CD4-positive, alpha-beta T cell (primary cell): ENCODE measurements at regions of chrX and their contacts with region 1.

Region 1: GRCh38 chrX:134484039-134484438 is 24.1 kb downstream of the HPRT1 start:
- DNase-seq: peak in 3 of 14 experiments; percentile 47 to 57 (median 54)
- ATAC-seq: peak; percentile 37
- H3K4me3 ChIP-seq: no peak overlapping the region
- H3K4me3 Mint-ChIP-seq: no peak overlapping the region
- H3K27ac ChIP-seq: no peak overlapping the region
- H3K27ac Mint-ChIP-seq: no peak overlapping the region
- H3K4me1 ChIP-seq: no peaks in the 10 kb centered on the region
- H3K4me1 Mint-ChIP-seq: no peaks in the 10 kb centered on the region
- H3K27me3 ChIP-seq: no peaks in the 10 kb centered on the region
- H3K27me3 Mint-ChIP-seq: no peaks in the 10 kb centered on the region
- CTCF ChIP-seq: peak; percentile 63

Region 2: DNA sequence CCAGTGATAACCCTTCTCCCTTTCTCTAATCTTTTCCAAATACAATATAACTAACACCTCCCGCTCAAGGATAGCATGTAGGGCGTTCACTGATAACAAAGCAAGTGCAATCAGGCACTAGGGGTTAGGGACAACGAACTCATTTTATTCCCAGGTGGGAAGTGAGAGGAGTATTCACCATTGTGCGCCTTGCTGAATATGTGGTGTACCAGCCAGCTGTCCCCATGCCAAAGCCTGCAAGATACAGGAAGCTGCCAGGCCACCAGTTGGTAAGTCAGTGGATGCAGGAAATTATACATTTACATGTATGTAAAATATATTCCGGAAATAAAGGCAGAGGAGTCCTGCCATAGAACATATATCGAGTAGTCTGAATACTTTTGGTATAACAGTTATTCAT is 30.4 kb before region 1 on chrX:
- CTCF ChIA-PET with region 1: no interaction called
- POLR2A ChIA-PET with region 1: no interaction called
- intact Hi-C with region 1: no loop called
- DNase-seq: no peak
- ATAC-seq: no peak
- H3K4me3 ChIP-seq: no peak overlapping the region
- H3K4me3 Mint-ChIP-seq: no peak overlapping the region
- H3K27ac ChIP-seq: no peak overlapping the region
- H3K27ac Mint-ChIP-seq: no peak overlapping the region
- H3K4me1 ChIP-seq: no peaks in the 10 kb centered on the region
- H3K4me1 Mint-ChIP-seq: no peaks in the 10 kb centered on the region
- H3K27me3 ChIP-seq: no peaks in the 10 kb centered on the region
- H3K27me3 Mint-ChIP-seq: no peaks in the 10 kb centered on the region
- CTCF ChIP-seq: no peak

Region 3: DNA sequence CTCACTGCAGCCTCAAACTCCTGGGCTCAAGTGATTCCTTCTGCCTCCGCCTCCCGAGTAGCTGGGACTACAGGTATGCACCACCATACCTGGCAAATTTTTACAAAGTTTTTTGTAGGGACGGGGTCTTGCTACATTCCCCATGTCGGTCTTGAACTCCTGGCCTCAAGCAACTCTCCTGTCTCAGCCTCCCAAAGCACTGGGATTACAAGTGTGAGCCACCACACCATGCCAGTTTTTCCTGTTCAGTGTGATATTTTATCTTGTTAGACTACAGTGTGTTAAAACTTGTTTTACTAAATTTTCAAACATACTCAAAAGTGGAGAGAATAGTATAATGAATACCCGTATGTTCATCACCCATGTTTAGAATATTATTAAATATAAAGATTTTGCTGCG is 12.0 kb before region 1 on chrX:
- CTCF ChIA-PET with region 1: no interaction called
- POLR2A ChIA-PET with region 1: no interaction called
- intact Hi-C with region 1: no loop called
- DNase-seq: no peak
- ATAC-seq: no peak
- H3K4me3 ChIP-seq: no peak overlapping the region
- H3K4me3 Mint-ChIP-seq: no peak overlapping the region
- H3K27ac ChIP-seq: no peak overlapping the region
- H3K27ac Mint-ChIP-seq: no peak overlapping the region
- H3K4me1 ChIP-seq: no peaks in the 10 kb centered on the region
- H3K4me1 Mint-ChIP-seq: no peaks in the 10 kb centered on the region
- H3K27me3 ChIP-seq: no peaks in the 10 kb centered on the region
- H3K27me3 Mint-ChIP-seq: no peaks in the 10 kb centered on the region
- CTCF ChIP-seq: no peak

Region 4: DNA sequence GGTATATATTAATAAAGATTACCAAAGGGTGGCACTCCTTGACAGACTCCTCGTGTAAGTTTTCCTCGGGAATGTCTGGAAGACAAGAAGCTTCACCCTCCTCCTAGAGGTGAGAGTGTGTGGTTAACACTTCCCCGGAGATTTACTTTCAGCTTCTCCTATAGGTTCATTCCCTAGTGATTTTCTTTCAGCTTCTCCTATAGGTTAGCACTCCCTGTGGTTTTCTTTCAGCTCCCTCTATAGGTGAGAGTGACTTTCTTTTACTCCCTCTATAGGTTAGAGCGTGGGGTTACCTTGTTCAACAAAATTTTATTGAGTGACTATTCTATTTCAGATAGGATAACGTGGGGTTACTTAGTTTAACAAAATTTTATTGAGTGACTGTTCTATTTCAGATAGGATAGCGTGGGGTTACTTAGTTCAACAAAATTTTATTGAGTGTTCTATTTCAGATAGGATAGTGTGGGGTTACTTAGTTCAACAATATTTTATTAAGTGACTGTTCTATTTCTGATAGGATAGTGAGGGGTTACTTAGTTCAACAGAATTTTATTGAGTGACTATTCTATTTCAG is 280.3 kb after region 1 on chrX:
- CTCF ChIA-PET with region 1: no interaction called
- POLR2A ChIA-PET with region 1: no interaction called
- intact Hi-C with region 1: loop called in 1 of 2 experiments (anchors 5 kb)
- DNase-seq: peak in 3 of 14 experiments; percentile 32 to 45 (median 44)
- ATAC-seq: peak; percentile 68
- H3K4me3 ChIP-seq: no peak overlapping the region
- H3K4me3 Mint-ChIP-seq: no peak overlapping the region
- H3K27ac ChIP-seq: no peak overlapping the region
- H3K27ac Mint-ChIP-seq: no peak overlapping the region
- H3K4me1 ChIP-seq: no peaks in the 10 kb centered on the region
- H3K4me1 Mint-ChIP-seq: no peaks in the 10 kb centered on the region
- H3K27me3 ChIP-seq: no peaks in the 10 kb centered on the region
- H3K27me3 Mint-ChIP-seq: no peaks in the 10 kb centered on the region
- CTCF ChIP-seq: no peak

Region 5: DNA sequence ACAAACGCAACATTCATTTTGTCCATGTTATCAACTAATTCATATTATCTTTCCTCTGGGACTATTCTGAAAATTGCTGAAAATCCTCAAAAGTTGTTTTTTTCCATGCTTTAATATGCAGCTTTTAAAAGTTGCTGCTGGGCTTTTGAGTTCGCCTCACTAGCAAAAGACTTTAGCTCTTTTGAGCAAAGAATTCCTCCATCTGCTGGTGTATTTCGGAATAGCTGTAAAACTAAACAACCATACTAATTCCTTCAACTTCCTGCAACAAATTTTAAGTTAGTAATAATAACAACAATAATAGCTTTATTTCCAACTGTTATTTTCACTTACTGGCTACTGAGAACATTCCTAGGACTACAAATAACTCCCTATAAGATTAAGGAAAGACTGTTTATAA is 298.8 kb after region 1 on chrX:
- CTCF ChIA-PET with region 1: no interaction called
- POLR2A ChIA-PET with region 1: interaction called, 3 read pairs
- intact Hi-C with region 1: loop called (anchors 2 to 5 kb)
- DNase-seq: peak in 3 of 14 experiments; percentile 12 to 28 (median 20)
- ATAC-seq: no peak
- H3K4me3 ChIP-seq: no peak overlapping the region
- H3K4me3 Mint-ChIP-seq: no peak overlapping the region
- H3K27ac ChIP-seq: no peak overlapping the region
- H3K27ac Mint-ChIP-seq: no peak overlapping the region
- H3K4me1 ChIP-seq: no peaks in the 10 kb centered on the region
- H3K4me1 Mint-ChIP-seq: no peaks in the 10 kb centered on the region
- H3K27me3 ChIP-seq: no peaks in the 10 kb centered on the region
- H3K27me3 Mint-ChIP-seq: no peaks in the 10 kb centered on the region
- CTCF ChIP-seq: no peak

Region 6: DNA sequence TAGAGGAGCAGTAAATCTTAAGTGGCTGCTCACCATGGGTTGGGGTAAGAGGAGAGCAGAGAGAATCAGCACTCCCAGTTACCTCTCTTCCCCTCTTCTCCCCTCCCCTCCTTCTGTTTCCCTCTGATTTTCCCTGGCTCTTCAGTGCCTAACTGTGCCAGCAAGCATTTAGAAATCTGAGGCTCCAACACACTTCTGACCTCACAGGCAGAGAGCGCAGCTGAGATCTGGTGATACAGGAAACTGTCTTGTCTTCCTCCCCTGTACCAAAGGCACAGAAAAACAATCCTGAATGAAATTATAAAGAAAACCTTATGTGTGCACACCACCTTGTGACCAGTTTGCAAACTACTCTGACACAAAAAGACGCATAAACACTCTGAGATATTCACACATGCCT is 424.3 kb after region 1 on chrX:
- CTCF ChIA-PET with region 1: no interaction called
- POLR2A ChIA-PET with region 1: no interaction called
- intact Hi-C with region 1: loop called (anchors 1 to 2 kb)
- DNase-seq: peak in 5 of 14 experiments; percentile 7 to 50 (median 47)
- ATAC-seq: peak; percentile 99
- H3K4me3 ChIP-seq: no peak overlapping the region
- H3K4me3 Mint-ChIP-seq: peak overlapping the region; percentile 3
- H3K27ac ChIP-seq: no peak overlapping the region
- H3K27ac Mint-ChIP-seq: peak overlapping the region; percentile 56
- H3K4me1 ChIP-seq: peaks cover 6% of the 10 kb centered on the region
- H3K4me1 Mint-ChIP-seq: peaks cover 9% of the 10 kb centered on the region
- H3K27me3 ChIP-seq: no peaks in the 10 kb centered on the region
- H3K27me3 Mint-ChIP-seq: no peaks in the 10 kb centered on the region
- CTCF ChIP-seq: peak; percentile 19